ENCODE measurements at regions of chr20 and their contacts with region 1.

Region 1: DNA sequence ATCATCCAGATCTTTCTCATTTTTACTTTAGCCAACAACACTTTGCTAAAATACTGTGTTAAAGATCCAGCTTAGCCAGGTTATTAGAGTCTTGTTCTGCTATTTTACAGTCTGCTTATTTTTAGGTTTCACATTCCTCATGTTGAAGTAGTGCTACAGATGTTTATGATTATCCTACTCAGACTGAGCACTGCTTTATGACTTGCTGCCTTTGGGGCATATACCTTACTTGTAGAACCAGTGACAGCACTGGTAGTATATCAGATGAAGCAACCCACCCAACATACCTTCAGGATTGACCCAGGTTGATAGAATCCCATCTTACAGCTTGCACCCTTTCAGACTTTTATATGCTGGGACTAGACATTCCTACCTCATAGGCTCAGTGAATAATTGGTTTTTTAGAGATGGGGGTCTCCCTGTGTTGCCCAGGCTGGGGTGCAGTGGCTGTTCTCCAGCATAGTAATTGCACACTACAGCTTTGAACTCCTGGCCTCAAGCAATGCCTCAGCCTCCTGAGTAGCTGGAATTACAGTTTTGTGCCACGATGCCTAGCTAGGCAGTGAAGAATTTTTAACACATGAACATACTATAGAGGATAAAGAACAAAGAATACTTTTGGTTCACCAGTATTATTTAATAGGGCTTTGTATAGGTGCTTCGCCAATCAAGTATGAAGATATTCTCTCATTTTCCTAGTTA is 63.8 kb upstream of the DYNLRB1 start:
- DNase-seq: no peak

Region 2: DNA sequence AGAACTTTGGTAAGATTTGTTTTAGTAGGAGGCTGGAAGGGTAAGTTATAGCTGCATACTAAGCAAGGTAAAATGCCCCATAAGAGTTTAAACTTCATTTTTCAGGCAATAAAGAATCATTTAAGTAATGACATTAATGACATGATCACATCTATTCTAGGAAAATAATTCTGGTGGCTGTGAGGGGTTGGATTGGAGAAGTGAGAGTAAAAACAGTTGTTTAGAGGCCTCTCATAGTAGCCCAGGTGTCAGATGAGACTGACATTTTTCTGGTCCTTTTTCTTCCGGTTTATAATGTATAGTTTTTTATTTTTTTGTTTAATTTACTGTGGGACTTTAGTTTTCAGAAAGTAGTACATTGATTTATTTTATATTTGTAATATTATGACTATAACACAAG is 48.5 kb before region 1 on chr20:
- in situ Hi-C with region 1: loop called (anchors 10 kb)
- DNase-seq: no peak

Region 3: GRCh38 chr20:34522969-34523871 is 70.8 kb after region 1 on chr20:
- in situ Hi-C with region 1: loop called (anchors 5 kb)
- DNase-seq: peak; percentile 75

Measured in Caki2 (cell line).